ENCODE measurements at regions of chr9 and their contacts with region 1.

Region 1: DNA sequence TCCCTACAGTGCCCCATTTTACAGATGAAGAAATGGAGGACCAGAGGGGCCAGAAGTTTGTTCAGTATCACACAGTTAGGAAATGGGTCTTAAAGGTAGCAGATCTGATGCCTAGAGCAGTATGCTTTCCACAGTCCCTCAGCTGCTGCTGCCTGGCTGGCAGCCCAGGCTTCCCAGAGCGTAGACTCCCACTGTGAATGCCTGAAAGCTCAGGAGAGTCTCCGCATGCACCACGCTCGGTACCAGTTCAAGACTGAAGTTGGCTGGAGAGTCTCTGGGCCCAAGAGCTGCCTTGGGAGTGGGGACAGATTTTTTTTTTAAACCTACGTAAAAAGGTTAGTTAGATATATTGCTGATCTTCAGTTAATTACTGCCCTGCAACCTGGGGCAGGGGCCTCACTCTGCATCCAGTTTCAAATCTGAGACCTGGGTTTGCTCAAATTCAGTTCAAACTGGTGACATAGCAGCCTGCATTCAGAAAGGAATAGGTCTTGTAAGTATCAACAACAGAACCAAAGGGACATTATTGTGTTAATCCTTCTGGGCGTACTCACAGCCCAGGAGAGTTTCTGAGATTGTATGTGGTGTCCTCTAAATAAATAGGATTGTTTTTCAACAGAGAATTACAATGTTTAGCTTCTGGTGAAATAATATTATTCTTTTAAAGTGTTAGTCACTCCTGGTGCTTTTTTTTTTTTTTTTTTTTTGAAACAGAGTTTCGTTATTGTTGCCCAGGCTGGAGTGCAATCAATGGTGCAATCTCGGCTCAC is 8.3 kb downstream of the NANS start:
- DNase-seq: no peak
- ATAC-seq: no peak
- H3K4me3 Mint-ChIP-seq: no peak overlapping the region
- H3K27ac Mint-ChIP-seq: no peak overlapping the region
- H3K4me1 Mint-ChIP-seq: peaks cover 7% of the 10 kb centered on the region
- H3K27me3 Mint-ChIP-seq: no peaks in the 10 kb centered on the region

Region 2: GRCh38 chr9:97982683-97983588 is 81.9 kb before region 1 on chr9 and contains the start of gene ANP32B:
- CTCF ChIA-PET with region 1: no interaction called
- POLR2A ChIA-PET with region 1: no interaction called
- intact Hi-C with region 1: no loop called
- DNase-seq: peak; percentile 98
- ATAC-seq: peak; percentile 89
- H3K4me3 Mint-ChIP-seq: peak within 1 kb of the TSS; percentile 81
- H3K27ac Mint-ChIP-seq: peak within 1 kb of the TSS; percentile 92
- H3K4me1 Mint-ChIP-seq: peaks cover 49% of the 10 kb centered on the region
- H3K27me3 Mint-ChIP-seq: no peaks in the 10 kb centered on the region
- total RNA-seq, gene ANP32B: 367 to 440 TPM

Region 3: GRCh38 chr9:98091881-98092612 is 27.2 kb after region 1 on chr9:
- CTCF ChIA-PET with region 1: no interaction called
- POLR2A ChIA-PET with region 1: interaction called, 10 read pairs
- intact Hi-C with region 1: no loop called
- DNase-seq: no peak
- ATAC-seq: no peak
- H3K4me3 Mint-ChIP-seq: no peak overlapping the region
- H3K27ac Mint-ChIP-seq: no peak overlapping the region
- H3K4me1 Mint-ChIP-seq: peaks cover 29% of the 10 kb centered on the region
- H3K27me3 Mint-ChIP-seq: no peaks in the 10 kb centered on the region